ENCODE measurements at regions of chr2 and their contacts with region 1.

Region 1: GRCh38 chr2:152175458-152176325 is at the start of gene STAM2:
- DNase-seq: peak; percentile 79 to 96 (median 91)

Region 2: GRCh38 chr2:152036611-152037469 is 138.9 kb before region 1 on chr2:
- intact Hi-C with region 1: loop called (anchors 5 kb)
- DNase-seq: peak; percentile 40 to 90 (median 75)

Region 3: DNA sequence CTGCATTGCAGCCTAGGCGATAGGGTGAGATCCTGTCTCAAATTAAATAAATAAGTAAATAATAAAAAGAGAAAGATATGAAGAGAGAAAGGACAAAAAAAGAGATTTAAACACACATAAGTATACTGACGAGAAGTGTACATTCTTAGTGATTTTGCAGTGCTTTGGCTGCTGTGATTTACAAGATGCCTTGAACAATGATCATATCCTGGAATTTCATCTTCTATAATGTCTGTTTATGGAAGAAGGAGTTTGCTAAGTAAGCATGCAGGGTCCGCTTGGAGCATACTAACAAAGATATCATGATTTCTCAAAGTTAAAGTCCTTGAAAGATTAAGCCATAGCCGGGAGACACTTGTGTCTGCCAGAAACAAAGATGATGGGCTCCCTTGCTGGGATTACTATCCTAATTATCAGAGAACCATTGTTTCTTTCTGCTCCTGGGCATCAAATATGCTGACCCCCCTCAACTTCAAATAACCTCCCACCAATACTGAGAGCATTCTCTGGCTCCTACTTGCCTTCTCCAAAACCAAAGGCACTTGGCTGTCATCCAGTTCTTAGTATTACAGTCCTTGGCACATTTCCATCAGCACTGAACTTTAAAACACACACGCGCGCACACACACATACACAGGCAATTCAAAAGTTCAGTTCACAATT is 47.4 kb after region 1 on chr2:
- intact Hi-C with region 1: no loop called
- DNase-seq: peak in 10 of 42 donors; percentile 14 to 64 (median 36)

Region 4: DNA sequence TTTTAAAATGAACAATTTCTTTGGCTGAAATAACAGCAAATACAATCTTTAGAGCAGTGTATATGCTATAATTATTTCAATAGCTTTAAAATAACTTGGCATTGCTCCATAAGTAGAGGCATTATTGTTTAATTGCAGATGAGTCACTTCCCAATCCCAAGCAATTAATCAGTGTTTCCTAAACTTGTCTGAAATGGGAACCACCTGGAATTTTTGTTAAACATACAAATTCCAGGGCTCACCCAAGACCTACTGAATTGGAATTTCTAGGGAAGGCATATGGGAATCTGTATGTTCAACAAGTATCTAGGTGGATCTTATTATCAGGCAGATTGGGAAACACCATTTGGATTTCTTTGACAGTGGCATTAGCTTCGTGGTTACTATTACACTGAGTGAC is 132.2 kb after region 1 on chr2:
- intact Hi-C with region 1: no loop called
- DNase-seq: no peak

Region 5: DNA sequence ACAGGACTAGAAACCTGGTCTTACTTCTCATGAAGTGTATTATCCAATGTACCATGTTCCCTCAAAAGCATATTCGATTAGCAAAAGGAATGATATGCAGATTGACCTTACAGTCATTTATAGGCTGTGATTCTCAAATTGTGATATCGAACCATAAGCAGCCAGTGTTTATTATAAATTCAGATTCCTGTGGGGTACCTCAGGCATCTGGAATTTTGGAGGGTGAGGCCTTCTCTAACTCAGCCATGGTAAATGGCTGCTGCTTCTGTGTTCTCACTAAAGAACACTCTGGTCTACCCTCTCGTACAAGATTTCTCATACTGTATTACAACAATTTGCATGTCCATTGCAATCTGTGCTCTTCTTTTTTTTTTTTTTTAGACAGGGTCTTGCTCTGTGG is 457.0 kb after region 1 on chr2:
- intact Hi-C with region 1: loop called (anchors 5 kb)
- DNase-seq: no peak

Region 6: DNA sequence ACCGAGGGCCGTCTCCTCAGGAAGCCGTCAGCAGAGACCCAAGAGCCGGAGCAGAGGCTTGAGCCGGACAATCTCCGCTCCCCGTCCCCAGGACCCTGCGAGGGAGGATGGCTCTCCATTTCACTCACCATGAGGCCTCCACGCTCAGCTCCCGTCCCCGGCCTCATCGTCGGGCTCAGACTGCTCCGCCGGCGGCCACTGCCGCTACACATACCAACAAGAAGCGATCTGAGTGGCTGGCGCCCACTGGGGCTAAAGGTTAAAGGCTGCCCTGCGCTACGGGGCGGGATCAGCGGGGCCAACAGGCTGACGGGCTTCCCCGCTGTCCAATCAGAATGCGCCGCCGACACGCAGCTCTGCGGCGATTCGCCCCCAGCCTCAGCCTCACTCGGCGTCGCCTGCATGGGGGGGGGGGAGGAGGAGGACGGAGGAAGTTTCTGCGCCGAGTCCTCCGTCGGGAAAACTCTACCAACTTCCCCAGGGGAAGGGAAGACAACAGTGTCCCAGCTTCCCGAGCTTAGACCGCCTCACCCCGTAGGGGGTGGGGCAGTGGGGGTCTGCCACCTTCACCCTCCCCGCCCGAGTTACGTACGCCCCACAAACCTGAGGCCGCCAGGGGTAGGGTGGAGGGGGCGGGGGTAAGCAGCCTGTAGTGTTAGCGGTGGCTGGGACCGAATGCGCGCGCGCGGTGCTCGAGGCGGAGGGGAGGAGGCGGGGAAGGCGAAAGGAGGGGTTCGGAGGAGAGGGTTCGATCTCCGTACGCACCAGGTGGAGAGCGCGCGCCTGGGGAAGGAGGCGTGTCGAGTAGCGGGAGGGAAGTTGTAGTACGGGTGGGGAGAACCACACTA is 541.8 kb after region 1 on chr2 and contains the start of gene PRPF40A:
- intact Hi-C with region 1: loop called (anchors 10 kb)
- DNase-seq: peak; percentile 98 to 100 (median 100)

Measured in head of caudate nucleus (tissue), 42 donors.